ENCODE measurements at regions of chr5 and their contacts with region 1.

Region 1: GRCh38 chr5:181181650-181182565 is 23.1 kb downstream of the TRIM7 start:
- DNase-seq: peak; percentile 89
- H3K4me3 Mint-ChIP-seq: peak overlapping the region; percentile 3
- H3K27ac Mint-ChIP-seq: no peak overlapping the region
- H3K4me1 Mint-ChIP-seq: peaks cover 12% of the 10 kb centered on the region
- H3K27me3 Mint-ChIP-seq: no peaks in the 10 kb centered on the region
- CTCF ChIP-seq: peak; percentile 95

Region 2: DNA sequence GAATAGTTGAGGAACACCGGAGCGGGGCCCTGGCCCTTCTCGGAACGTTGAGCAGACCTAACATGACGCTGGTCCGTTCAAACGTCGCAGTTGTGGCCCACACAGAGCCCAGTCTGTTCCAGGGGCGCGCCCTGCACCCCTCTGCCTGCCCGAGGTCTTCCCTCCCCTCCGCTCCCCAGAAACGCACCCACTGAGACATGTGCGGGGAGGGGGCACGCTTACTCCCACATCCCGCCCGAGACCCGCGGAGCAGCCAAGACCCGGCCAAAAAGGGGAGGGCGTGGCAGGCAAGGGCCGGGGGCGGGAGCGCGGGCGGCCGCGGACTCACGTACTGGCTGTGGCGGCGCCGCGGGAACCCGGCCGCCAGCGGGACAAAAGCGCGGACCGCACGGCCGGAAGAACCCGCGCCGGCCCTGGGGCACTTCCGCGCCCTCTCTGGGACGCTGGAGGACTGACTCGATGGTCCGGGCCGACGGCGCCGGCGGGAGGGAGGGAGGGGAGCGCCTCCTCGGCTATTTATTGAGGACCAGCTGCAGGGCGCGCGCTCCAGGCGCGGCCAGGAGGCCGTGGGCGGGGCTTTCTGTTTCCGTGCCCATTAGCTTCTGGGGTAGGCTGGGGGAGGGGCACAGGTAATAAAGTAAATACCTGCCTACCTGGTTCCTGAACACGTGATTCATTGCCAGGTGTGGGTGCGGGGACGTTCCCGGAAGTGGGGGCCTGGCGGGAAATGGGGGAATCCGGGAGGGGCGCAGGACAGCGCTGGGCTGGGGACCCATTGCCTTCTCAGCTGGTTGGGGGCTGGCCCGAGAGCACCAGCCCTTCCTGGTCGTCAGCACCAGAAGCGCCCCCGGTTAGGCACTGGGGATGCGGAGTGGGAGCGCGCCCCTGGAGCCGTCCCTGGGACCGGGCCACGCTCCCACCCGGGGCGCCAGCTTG is 320.8 kb before region 1 on chr5 and contains the start of gene ZFP62:
- CTCF ChIA-PET with region 1: interaction called, 11 read pairs
- POLR2A ChIA-PET with region 1: interaction called, 19 read pairs
- intact Hi-C with region 1: loop called (anchors 10 kb)
- DNase-seq: peak; percentile 95
- H3K4me3 Mint-ChIP-seq: peak within 1 kb of the TSS; percentile 84
- H3K27ac Mint-ChIP-seq: peak within 1 kb of the TSS; percentile 89
- H3K4me1 Mint-ChIP-seq: peaks cover 21% of the 10 kb centered on the region
- H3K27me3 Mint-ChIP-seq: no peaks in the 10 kb centered on the region
- CTCF ChIP-seq: no peak
- total RNA-seq, gene ZFP62: 31.2 and 36.9 TPM in 2 replicates

Region 3: GRCh38 chr5:181100121-181101015 is 81.5 kb before region 1 on chr5:
- CTCF ChIA-PET with region 1: no interaction called
- POLR2A ChIA-PET with region 1: no interaction called
- intact Hi-C with region 1: no loop called
- DNase-seq: no peak
- H3K4me3 Mint-ChIP-seq: no peak overlapping the region
- H3K27ac Mint-ChIP-seq: no peak overlapping the region
- H3K4me1 Mint-ChIP-seq: no peaks in the 10 kb centered on the region
- H3K27me3 Mint-ChIP-seq: peaks cover 18% of the 10 kb centered on the region
- CTCF ChIP-seq: no peak

Region 4: DNA sequence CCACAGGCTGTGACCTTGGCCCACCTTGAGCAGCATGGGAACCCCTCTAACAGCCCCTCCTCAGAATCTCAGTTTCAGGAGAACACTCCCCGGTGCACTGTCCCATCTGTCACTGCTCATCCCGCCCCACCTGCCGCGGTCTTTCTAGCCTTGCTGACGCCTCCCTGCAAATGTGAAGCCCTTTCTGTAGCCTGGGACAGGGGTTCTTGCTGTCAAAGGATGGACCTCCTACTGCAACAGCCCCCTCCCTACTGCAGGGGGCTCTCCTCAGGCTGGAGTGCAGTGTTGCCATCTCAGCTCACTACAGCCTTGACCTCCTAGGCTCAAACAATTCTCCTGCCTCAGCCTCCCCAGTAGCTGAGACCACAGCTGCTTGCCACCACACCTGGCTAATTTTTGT is 70.9 kb before region 1 on chr5:
- CTCF ChIA-PET with region 1: no interaction called
- POLR2A ChIA-PET with region 1: no interaction called
- intact Hi-C with region 1: no loop called
- DNase-seq: no peak
- H3K4me3 Mint-ChIP-seq: no peak overlapping the region
- H3K27ac Mint-ChIP-seq: peak overlapping the region; percentile 43
- H3K4me1 Mint-ChIP-seq: peaks cover 9% of the 10 kb centered on the region
- H3K27me3 Mint-ChIP-seq: peaks cover 13% of the 10 kb centered on the region
- CTCF ChIP-seq: no peak

Region 5: GRCh38 chr5:181159286-181159829 is 22.6 kb before region 1 on chr5:
- CTCF ChIA-PET with region 1: interaction called, 6 read pairs
- POLR2A ChIA-PET with region 1: no interaction called
- intact Hi-C with region 1: loop called (anchors 1 kb)
- DNase-seq: peak; percentile 94
- H3K4me3 Mint-ChIP-seq: peak overlapping the region; percentile 66
- H3K27ac Mint-ChIP-seq: peak overlapping the region; percentile 97
- H3K4me1 Mint-ChIP-seq: peaks cover 11% of the 10 kb centered on the region
- H3K27me3 Mint-ChIP-seq: peaks cover 25% of the 10 kb centered on the region
- CTCF ChIP-seq: peak; percentile 97

Region 6: GRCh38 chr5:181207214-181208107 is 25.6 kb after region 1 on chr5:
- CTCF ChIA-PET with region 1: interaction called, 6 read pairs
- POLR2A ChIA-PET with region 1: interaction called, 432 read pairs
- intact Hi-C with region 1: no loop called
- DNase-seq: peak; percentile 94
- H3K4me3 Mint-ChIP-seq: peak overlapping the region; percentile 84
- H3K27ac Mint-ChIP-seq: peak overlapping the region; percentile 81
- H3K4me1 Mint-ChIP-seq: peaks cover 29% of the 10 kb centered on the region
- H3K27me3 Mint-ChIP-seq: no peaks in the 10 kb centered on the region
- CTCF ChIP-seq: no peak

Region 7: GRCh38 chr5:181223058-181223728 is 41.3 kb after region 1 on chr5 and contains the start of gene TRIM41:
- CTCF ChIA-PET with region 1: interaction called, 4 read pairs
- POLR2A ChIA-PET with region 1: interaction called, 171 read pairs
- intact Hi-C with region 1: loop called (anchors 5 kb)
- DNase-seq: peak; percentile 99
- H3K4me3 Mint-ChIP-seq: peak within 1 kb of the TSS; percentile 91
- H3K27ac Mint-ChIP-seq: peak within 1 kb of the TSS; percentile 91
- H3K4me1 Mint-ChIP-seq: peaks cover 26% of the 10 kb centered on the region
- H3K27me3 Mint-ChIP-seq: no peaks in the 10 kb centered on the region
- CTCF ChIP-seq: no peak
- total RNA-seq, gene TRIM41: 42.8 and 49.4 TPM in 2 replicates

Region 8: GRCh38 chr5:181260387-181261319 is 78.7 kb after region 1 on chr5 and contains the start of gene TRIM52:
- CTCF ChIA-PET with region 1: interaction called, 11 read pairs
- POLR2A ChIA-PET with region 1: interaction called, 21 read pairs
- intact Hi-C with region 1: no loop called
- DNase-seq: peak; percentile 91
- H3K4me3 Mint-ChIP-seq: peak within 1 kb of the TSS; percentile 86
- H3K27ac Mint-ChIP-seq: peak within 1 kb of the TSS; percentile 89
- H3K4me1 Mint-ChIP-seq: peaks cover 23% of the 10 kb centered on the region
- H3K27me3 Mint-ChIP-seq: no peaks in the 10 kb centered on the region
- CTCF ChIP-seq: no peak
- total RNA-seq, gene TRIM52: 12.5 and 16.1 TPM in 2 replicates